K562 (cell line): ENCODE measurements at regions of chr5 and their contacts with region 1.

Region 1: GRCh38 chr5:138760448-138761110 is 7.4 kb downstream of the CTNNA1 start:
- DNase-seq: no peak
- ATAC-seq: no peak
- H3K4me3 ChIP-seq: no peak overlapping the region
- H3K27ac ChIP-seq: no peak overlapping the region
- H3K4me1 ChIP-seq: peaks cover 0 to 6% of the 10 kb centered on the region in 2 experiments; a peak in 3 of 5 replicates
- H3K27me3 ChIP-seq: no peaks in the 10 kb centered on the region
- CTCF ChIP-seq: no peak
- EP300 ChIP-seq: no peak
- POLR2A ChIP-seq: no peak
- RAD21 ChIP-seq: no peak

Region 2: DNA sequence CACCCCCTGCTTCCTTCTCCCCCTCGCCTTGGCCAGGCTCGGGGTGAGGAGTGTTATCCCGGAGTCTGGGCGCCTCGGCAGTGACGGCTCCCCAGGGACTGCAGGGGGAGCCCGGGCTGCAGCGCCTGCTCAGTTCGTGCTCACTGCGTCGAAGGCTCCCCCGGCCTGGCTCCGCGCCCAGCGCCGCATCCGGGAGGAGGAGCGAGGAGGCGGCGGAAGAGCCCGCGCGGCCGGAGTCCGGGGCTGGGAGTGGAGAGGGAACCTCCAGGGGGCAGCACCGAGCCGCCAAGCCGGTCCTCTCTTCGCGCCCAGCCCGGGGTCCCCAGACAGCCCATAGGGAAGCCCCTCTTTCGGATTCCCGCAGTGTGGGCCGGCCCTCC is 296.6 kb before region 1 on chr5:
- CTCF ChIA-PET with region 1: no interaction called
- POLR2A ChIA-PET with region 1: no interaction called
- in situ Hi-C with region 1: no loop called
- intact Hi-C with region 1: no loop called
- DNase-seq: peak; percentile 91 to 97 (median 94)
- ATAC-seq: peak; percentile 63
- H3K4me3 ChIP-seq: peak overlapping the region; percentile 90
- H3K27ac ChIP-seq: peak overlapping the region; percentile 91
- H3K4me1 ChIP-seq: peaks cover 28 to 60% of the 10 kb centered on the region in 2 experiments
- H3K27me3 ChIP-seq: no peaks in the 10 kb centered on the region
- CTCF ChIP-seq: peak; percentile 77 to 93 (median 85)
- EP300 ChIP-seq: no peak
- POLR2A ChIP-seq: peak; percentile 70; the same call in 1 of the 2 replicates
- RAD21 ChIP-seq: peak; percentile 79 to 91

Region 3: DNA sequence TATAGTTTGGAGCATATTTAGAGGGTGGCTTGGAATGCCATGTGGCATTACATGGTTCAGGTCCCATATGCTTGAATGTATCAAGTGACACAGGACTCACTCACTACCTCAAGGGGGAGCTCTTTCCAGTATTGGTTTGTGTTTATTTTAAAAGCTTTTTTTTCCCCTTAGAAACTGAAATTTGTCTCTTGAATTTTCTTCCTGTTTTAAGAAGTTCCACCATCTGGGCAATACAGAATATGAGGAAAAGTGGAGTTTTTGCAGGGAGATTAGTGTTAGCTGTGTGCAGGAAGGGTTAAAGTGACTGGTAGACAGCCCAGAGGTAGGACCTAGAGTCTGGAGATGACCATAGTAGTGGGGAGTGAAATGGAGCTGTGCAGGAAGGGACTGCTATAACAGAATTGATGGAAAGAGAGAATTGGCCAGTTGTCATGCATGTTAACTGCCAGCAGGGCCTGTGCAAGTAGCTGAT is 29.2 kb after region 1 on chr5:
- CTCF ChIA-PET with region 1: no interaction called
- POLR2A ChIA-PET with region 1: interaction called, 10 read pairs
- in situ Hi-C with region 1: no loop called
- intact Hi-C with region 1: no loop called
- DNase-seq: peak; percentile 39 to 62 (median 49)
- ATAC-seq: peak; percentile 94
- H3K4me3 ChIP-seq: no peak overlapping the region
- H3K27ac ChIP-seq: no peak overlapping the region
- H3K4me1 ChIP-seq: no peaks in the 10 kb centered on the region
- H3K27me3 ChIP-seq: no peaks in the 10 kb centered on the region
- CTCF ChIP-seq: peak; percentile 48 to 73 (median 72)
- EP300 ChIP-seq: no peak
- POLR2A ChIP-seq: no peak
- RAD21 ChIP-seq: peak in 1 of 2 experiments; percentile 37; a peak in 2 of 4 replicates

Region 4: GRCh38 chr5:139492700-139493192 is 732.2 kb after region 1 on chr5:
- CTCF ChIA-PET with region 1: no interaction called
- POLR2A ChIA-PET with region 1: no interaction called
- in situ Hi-C with region 1: no loop called
- intact Hi-C with region 1: no loop called
- DNase-seq: no peak
- ATAC-seq: no peak
- H3K4me3 ChIP-seq: no peak overlapping the region
- H3K27ac ChIP-seq: no peak overlapping the region
- H3K4me1 ChIP-seq: peaks cover 0 to 18% of the 10 kb centered on the region in 2 experiments; a peak in 4 of 5 replicates
- H3K27me3 ChIP-seq: no peaks in the 10 kb centered on the region
- CTCF ChIP-seq: no peak
- EP300 ChIP-seq: no peak
- POLR2A ChIP-seq: no peak
- RAD21 ChIP-seq: no peak